ENCODE measurements at regions of chr11 and their contacts with region 1.

Region 1: GRCh38 chr11:118928108-118928870 is 2.6 kb upstream of the BCL9L start:
- DNase-seq: peak; percentile 95
- H3K4me3 ChIP-seq: peak overlapping the region; percentile 80 to 99
- H3K27ac ChIP-seq: peak overlapping the region; percentile 91 to 93
- H3K4me1 ChIP-seq: peaks cover 9 to 33% of the 10 kb centered on the region in 2 experiments; a peak in 3 of 4 replicates
- H3K27me3 ChIP-seq: no peaks in the 10 kb centered on the region
- CTCF ChIP-seq: peak; percentile 94
- EP300 ChIP-seq: no peak
- RAD21 ChIP-seq: peak; percentile 75

Region 2: DNA sequence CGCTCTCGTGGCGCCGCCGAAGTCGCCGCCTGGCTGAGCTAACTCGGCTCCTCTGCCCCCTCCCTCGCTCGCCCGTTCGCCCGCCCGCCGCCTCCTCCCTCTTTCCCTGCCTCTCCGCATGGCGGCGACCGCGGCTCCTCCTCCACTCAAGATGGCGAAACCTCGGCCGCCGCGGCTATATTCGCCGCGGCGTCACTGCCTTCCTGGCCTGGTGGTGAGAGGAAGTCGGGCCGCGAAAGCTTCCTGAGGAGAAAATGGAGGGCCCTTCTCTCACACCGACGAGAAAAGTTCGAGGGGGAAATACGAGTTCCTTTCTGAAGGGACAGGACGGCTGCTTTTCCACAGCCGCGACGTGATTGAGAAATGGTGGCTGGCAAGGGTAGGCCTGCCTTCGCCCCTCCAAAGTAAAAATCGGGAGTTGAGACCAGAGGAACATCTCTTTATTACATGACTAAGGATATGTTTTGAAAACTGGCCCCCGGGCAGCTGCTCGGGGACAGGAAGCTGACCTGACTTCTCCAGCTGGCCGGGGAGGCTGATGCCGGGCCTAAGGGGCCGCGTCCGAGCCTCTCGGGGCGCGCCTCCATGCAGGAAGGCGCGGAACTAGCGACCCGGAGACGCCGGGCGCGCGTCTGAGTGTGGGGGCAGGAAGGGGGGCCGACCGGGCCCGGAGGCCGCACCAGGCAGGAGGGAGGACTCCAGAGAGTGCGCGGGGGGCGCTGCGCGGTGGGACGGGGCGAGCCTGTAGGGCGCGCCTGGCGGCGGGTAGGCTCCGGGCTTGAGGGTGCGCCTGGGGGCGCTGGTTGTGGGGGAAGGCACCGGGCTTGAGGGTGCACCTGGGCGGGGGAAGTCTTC is 137.0 kb before region 1 on chr11 and contains the start of gene DDX6:
- CTCF ChIA-PET with region 1: interaction called, 14 read pairs
- POLR2A ChIA-PET with region 1: interaction called, 4 read pairs
- DNase-seq: peak; percentile 94
- H3K4me3 ChIP-seq: peak within 1 kb of the TSS; percentile 71 to 90
- H3K27ac ChIP-seq: peak within 1 kb of the TSS; percentile 96 to 97
- H3K4me1 ChIP-seq: peaks cover 4 to 19% of the 10 kb centered on the region in 2 experiments; a peak in 2 of 4 replicates
- H3K27me3 ChIP-seq: no peaks in the 10 kb centered on the region
- CTCF ChIP-seq: peak; percentile 23
- EP300 ChIP-seq: peak in 1 of 2 experiments; percentile 29; a peak in 1 of 4 replicates
- RAD21 ChIP-seq: 0 out of 2 replicates have a peak, but pooled peaks have one; percentile 18
- polyA plus RNA-seq, gene DDX6: 7.9 and 13.0 TPM in 2 replicates

Region 3: GRCh38 chr11:118895142-118896039 is 32.9 kb before region 1 on chr11:
- CTCF ChIA-PET with region 1: interaction called, 24 read pairs
- POLR2A ChIA-PET with region 1: no interaction called
- DNase-seq: no peak
- H3K4me3 ChIP-seq: no peak overlapping the region
- H3K27ac ChIP-seq: no peak overlapping the region
- H3K4me1 ChIP-seq: no peaks in the 10 kb centered on the region; a peak in 1 of 4 replicates
- H3K27me3 ChIP-seq: no peaks in the 10 kb centered on the region
- CTCF ChIP-seq: no peak
- EP300 ChIP-seq: no peak
- RAD21 ChIP-seq: no peak

Region 4: GRCh38 chr11:118907051-118908042 is 20.9 kb before region 1 on chr11:
- CTCF ChIA-PET with region 1: no interaction called
- POLR2A ChIA-PET with region 1: interaction called, 37 read pairs
- DNase-seq: peak; percentile 90
- H3K4me3 ChIP-seq: peak overlapping the region; percentile 18 to 23; a peak in 2 of 4 replicates
- H3K27ac ChIP-seq: peak overlapping the region; percentile 98 to 100
- H3K4me1 ChIP-seq: peaks cover 45 to 49% of the 10 kb centered on the region in 2 experiments
- H3K27me3 ChIP-seq: no peaks in the 10 kb centered on the region
- CTCF ChIP-seq: peak; percentile 93
- EP300 ChIP-seq: peak in 1 of 2 experiments; percentile 46; a peak in 2 of 4 replicates
- RAD21 ChIP-seq: peak; percentile 98

Region 5: DNA sequence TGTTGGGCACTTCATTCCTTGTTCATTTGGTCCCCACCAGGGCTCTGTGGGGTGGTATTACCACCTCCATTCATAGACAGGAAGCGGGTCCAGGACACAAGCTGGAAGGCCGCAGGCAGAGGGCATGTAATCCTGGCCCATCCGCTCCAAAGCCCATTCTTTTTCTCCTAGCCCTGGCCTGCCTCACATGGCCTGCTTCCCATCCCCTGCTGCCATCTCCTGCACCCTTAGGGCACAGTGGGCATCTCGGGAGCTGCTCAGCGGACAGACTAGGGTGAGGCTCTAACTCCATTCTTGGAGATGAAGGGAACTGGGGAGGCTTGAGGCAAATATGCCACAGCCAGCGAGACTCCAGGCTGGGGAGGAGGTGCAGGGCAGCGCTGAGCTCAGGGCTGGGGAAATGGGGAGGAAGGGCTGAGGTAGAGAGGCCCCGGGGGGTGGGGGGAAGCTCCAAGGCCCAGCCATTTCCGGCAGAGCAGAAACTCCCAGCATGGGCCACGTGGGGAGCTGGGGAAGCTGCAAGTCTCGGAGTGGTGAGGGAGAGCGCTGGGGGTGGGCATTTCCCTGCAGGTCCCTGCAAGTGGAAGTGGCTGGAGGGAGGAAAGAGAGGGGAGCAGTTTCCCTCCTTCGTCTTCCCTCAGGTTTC is 11.8 kb after region 1 on chr11:
- CTCF ChIA-PET with region 1: interaction called, 46 read pairs
- POLR2A ChIA-PET with region 1: no interaction called
- DNase-seq: peak; percentile 50
- H3K4me3 ChIP-seq: no peak overlapping the region
- H3K27ac ChIP-seq: no peak overlapping the region
- H3K4me1 ChIP-seq: peaks cover 4 to 6% of the 10 kb centered on the region in 2 experiments; a peak in 2 of 4 replicates
- H3K27me3 ChIP-seq: no peaks in the 10 kb centered on the region
- CTCF ChIP-seq: no peak
- EP300 ChIP-seq: no peak
- RAD21 ChIP-seq: no peak

Region 6: DNA sequence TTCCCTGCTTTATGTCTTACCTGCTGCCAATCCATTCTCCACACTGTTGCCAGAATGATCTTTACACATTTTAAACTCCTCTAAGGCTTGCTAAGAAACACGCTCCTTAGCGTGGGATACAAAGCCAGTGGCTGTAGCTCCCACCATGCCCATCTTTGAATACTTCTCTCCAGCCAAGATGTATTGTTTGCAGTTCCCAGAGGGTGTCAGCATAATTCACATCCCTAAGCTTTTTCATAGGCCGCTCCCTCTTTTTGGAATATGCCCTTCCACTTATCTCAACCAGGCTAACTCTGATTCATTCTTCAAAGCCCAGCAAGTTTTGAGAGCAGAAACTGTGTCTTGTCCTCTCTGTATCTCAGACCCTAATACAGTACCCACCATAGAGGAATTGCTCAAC is 19.7 kb after region 1 on chr11:
- CTCF ChIA-PET with region 1: interaction called, 186 read pairs
- POLR2A ChIA-PET with region 1: no interaction called
- DNase-seq: no peak
- H3K4me3 ChIP-seq: no peak overlapping the region
- H3K27ac ChIP-seq: no peak overlapping the region
- H3K4me1 ChIP-seq: no peaks in the 10 kb centered on the region
- H3K27me3 ChIP-seq: 0 out of 2 replicates have a peak, but pooled peaks cover 11% of the 10 kb centered on the region
- CTCF ChIP-seq: no peak
- EP300 ChIP-seq: no peak
- RAD21 ChIP-seq: no peak

Region 7: GRCh38 chr11:118956094-118956846 is 28.0 kb after region 1 on chr11 and contains the start of gene UPK2:
- CTCF ChIA-PET with region 1: interaction called, 186 read pairs
- POLR2A ChIA-PET with region 1: no interaction called
- DNase-seq: peak; percentile 93
- H3K4me3 ChIP-seq: no peak within 1 kb of the TSS; a peak in 1 of 4 replicates
- H3K27ac ChIP-seq: no peak within 1 kb of the TSS
- H3K4me1 ChIP-seq: peaks cover 0 to 6% of the 10 kb centered on the region in 2 experiments; a peak in 1 of 4 replicates
- H3K27me3 ChIP-seq: no peaks in the 10 kb centered on the region
- CTCF ChIP-seq: peak; percentile 93
- EP300 ChIP-seq: no peak
- RAD21 ChIP-seq: peak; percentile 98
- polyA plus RNA-seq, gene UPK2: 0.15 and 0.21 TPM in 2 replicates

Measured in SK-N-SH (cell line).